Lower lobe of right lung (tissue), 2 donors: ENCODE measurements at regions of chr20 and their contacts with region 1.

Region 1: DNA sequence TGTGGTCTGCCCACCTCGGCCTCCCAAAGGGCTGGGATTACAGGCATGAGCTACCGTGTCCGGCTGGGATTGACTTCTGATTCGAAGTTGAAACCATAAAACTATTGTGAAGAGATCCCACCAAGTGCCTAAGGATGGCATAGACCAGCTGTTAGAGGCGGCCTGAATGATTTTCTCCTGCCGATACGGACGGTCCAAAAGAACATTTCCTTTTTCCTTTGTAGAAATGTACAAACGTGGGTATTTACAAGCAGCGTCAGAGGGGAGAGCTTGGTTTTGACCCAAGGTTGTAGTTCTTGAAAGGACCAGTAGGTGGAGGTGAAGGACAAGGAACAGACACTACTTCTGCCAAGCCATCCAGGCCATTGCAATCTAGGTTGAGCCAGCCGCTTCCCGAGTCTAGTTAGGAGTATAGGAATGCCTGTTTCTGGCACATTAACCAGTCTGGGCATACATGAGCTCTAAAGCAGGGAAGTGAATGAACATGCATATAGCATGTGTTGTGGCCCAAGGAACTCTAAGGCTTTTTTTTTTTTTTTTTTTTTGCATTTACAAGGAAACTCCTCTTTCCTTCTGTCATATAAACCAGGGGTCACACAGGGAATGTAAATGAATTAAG is 29.1 kb downstream of the MOCS3 start:
- DNase-seq: no peak
- ATAC-seq: peak; percentile 93 to 94
- H3K4me3 ChIP-seq: no peak overlapping the region
- H3K27ac ChIP-seq: no peak overlapping the region
- H3K4me1 ChIP-seq: no peaks in the 10 kb centered on the region
- H3K27me3 ChIP-seq: peaks cover 37% of the 10 kb centered on the region
- CTCF ChIP-seq: peak; percentile 91

Region 2: DNA sequence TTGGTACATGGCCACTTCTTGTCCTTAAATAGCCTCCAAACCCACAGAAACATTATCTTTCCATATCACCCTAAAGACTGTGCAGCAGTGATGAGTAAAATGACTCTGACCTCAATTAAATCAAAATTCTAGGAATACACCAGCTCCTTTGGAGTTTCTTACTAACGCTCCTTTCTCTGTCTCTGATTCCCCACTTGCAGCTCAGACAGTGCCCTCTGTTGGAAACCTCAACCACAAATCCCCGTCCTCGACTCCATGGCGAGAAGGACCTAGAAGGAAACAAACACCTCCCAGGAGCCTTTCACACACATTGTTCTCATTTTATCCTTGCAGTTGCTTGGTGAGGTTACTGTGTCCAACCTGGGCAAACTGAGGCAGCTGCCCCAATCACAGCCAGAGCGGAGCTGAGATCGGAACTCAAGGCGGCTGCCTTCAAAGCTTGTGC is 274.0 kb before region 1 on chr20:
- intact Hi-C with region 1: no loop called
- DNase-seq: no peak
- ATAC-seq: no peak
- H3K4me3 ChIP-seq: no peak overlapping the region
- H3K27ac ChIP-seq: no peak overlapping the region
- H3K4me1 ChIP-seq: peaks cover 13% of the 10 kb centered on the region
- H3K27me3 ChIP-seq: no peaks in the 10 kb centered on the region
- CTCF ChIP-seq: peak; percentile 40

Region 3: GRCh38 chr20:51306503-51307358 is 319.0 kb after region 1 on chr20:
- intact Hi-C with region 1: loop called (anchors 10 kb)
- DNase-seq: peak; percentile 76
- ATAC-seq: peak; percentile 87 to 95
- H3K4me3 ChIP-seq: no peak overlapping the region
- H3K27ac ChIP-seq: no peak overlapping the region
- H3K4me1 ChIP-seq: peaks cover 7% of the 10 kb centered on the region
- H3K27me3 ChIP-seq: peaks cover 14% of the 10 kb centered on the region
- CTCF ChIP-seq: peak; percentile 91